Heart right ventricle (tissue), 16 donors: ENCODE measurements at regions of chr22 and their contacts with region 1.

Region 1: GRCh38 chr22:17436382-17436980 is 67.2 kb downstream of the CECR2 start:
- DNase-seq: peak in 1 of 2 donors; percentile 9
- ATAC-seq: peak in 7 of 8 donors; percentile 16 to 78 (median 55)
- H3K4me3 ChIP-seq: no peak overlapping the region
- H3K27ac ChIP-seq: peak overlapping the region in 3 of 10 donors; percentile 8 to 41 (median 33)
- H3K4me1 ChIP-seq: peaks cover 0 to 33% (median 18%) of the 10 kb centered on the region in 9 donors
- H3K27me3 ChIP-seq: no peaks in the 10 kb centered on the region
- CTCF ChIP-seq: peak in 3 of 9 donors; percentile 8 to 28 (median 11)

Region 2: GRCh38 chr22:17471886-17472535 is 35.5 kb after region 1 on chr22:
- intact Hi-C with region 1: loop called in 2 of 10 experiments (anchors 5 kb)
- DNase-seq: no peak
- ATAC-seq: peak in 7 of 8 donors; percentile 51 to 86 (median 70)
- H3K4me3 ChIP-seq: no peak overlapping the region
- H3K27ac ChIP-seq: peak overlapping the region in 5 of 10 donors; percentile 3 to 57 (median 30)
- H3K4me1 ChIP-seq: peaks cover 0 to 34% (median 22%) of the 10 kb centered on the region in 9 donors
- H3K27me3 ChIP-seq: peaks cover 0 to 9% (median 0%) of the 10 kb centered on the region in 7 donors
- CTCF ChIP-seq: no peak